Ascending aorta (tissue), 2 donors: ENCODE measurements at regions of chr17 and their contacts with region 1.

Region 1: DNA sequence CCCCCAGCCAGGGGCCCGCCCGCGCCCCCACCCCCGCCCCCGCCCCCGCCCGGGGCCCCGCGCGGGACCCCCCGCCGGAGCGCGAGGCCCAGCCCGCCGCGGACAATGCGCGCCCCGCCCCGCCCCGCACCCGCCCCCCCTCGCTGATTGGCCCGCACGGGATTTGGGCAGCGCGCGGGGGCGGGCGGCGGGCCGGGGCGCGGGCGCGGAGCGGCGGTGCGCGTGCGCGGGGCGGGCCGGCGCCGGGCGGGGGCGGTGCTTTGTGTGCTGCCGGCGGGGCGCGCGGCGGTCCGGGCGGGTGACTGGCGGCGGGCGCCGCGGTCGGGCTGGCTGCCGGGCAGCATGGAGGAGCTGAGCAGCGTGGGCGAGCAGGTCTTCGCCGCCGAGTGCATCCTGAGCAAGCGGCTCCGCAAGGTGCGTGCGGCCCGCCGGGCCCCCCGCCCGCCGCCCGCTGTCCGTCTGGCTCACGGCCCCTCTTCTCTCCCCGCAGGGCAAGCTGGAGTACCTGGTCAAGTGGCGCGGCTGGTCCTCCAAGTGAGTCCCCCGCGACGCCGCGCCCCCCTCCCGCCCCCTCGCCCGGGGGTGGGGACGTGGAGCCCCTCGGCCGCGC is at the start of gene CBX2:
- DNase-seq: peak in 1 of 2 donors; percentile 80
- H3K4me3 ChIP-seq: peak within 1 kb of the TSS; percentile 70 to 72
- H3K27ac ChIP-seq: no peak within 1 kb of the TSS
- H3K4me1 ChIP-seq: peaks cover 5 to 7% of the 10 kb centered on the region in 2 donors
- H3K27me3 ChIP-seq: peaks cover 17% of the 10 kb centered on the region
- CTCF ChIP-seq: no peak
- total RNA-seq, gene CBX2: 4.6 TPM

Region 2: DNA sequence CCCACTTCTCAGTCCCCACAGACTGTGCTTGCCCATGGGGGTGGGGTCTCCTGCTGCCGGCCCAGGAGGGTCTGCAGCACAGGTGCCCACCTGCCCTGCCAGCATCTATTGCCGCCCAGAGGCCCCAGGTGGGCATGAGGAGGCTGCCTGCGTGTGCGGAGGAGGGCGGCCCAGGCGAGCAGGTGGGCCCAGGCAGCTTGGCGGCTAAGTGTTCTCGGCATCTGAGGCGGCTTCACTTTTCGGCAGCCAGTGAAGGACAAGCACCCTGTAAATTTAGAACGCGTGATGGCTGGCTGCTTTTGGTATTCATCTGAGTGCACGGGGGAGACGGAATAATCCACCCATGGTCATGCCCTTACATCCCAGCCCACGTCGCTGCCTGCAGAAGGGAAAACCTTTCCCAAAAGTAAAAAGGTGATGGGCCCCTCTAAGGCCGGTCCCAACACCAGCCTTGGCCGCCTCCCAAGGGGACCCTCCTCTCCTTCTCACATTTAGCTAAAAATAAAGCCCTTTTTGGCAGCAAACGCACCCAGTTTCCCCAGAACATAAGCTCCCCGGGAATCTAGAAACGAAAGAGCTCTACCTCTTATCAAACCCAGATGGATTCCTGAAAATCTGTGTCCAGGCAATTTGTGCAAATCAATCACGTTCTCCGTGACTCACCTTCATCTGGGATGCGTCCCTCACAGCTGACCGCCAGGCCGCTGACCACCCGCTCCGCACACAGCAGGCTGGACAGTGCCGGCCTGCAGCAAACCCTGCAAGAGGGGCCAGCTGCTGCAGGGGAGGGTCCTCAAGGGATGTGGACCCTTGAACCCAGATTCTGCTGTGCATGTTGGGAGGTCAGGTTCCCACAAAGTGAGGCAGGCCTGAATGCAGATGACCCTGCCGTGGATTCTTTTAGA is 246.6 kb before region 1 on chr17:
- intact Hi-C with region 1: no loop called
- DNase-seq: no peak
- H3K4me3 ChIP-seq: no peak overlapping the region
- H3K27ac ChIP-seq: no peak overlapping the region
- H3K4me1 ChIP-seq: no peaks in the 10 kb centered on the region
- H3K27me3 ChIP-seq: no peaks in the 10 kb centered on the region
- CTCF ChIP-seq: no peak

Region 3: GRCh38 chr17:79695797-79696609 is 82.0 kb before region 1 on chr17:
- intact Hi-C with region 1: no loop called
- DNase-seq: no peak
- H3K4me3 ChIP-seq: no peak overlapping the region
- H3K27ac ChIP-seq: no peak overlapping the region
- H3K4me1 ChIP-seq: peaks cover 0 to 11% of the 10 kb centered on the region in 2 donors
- H3K27me3 ChIP-seq: no peaks in the 10 kb centered on the region
- CTCF ChIP-seq: no peak

Region 4: DNA sequence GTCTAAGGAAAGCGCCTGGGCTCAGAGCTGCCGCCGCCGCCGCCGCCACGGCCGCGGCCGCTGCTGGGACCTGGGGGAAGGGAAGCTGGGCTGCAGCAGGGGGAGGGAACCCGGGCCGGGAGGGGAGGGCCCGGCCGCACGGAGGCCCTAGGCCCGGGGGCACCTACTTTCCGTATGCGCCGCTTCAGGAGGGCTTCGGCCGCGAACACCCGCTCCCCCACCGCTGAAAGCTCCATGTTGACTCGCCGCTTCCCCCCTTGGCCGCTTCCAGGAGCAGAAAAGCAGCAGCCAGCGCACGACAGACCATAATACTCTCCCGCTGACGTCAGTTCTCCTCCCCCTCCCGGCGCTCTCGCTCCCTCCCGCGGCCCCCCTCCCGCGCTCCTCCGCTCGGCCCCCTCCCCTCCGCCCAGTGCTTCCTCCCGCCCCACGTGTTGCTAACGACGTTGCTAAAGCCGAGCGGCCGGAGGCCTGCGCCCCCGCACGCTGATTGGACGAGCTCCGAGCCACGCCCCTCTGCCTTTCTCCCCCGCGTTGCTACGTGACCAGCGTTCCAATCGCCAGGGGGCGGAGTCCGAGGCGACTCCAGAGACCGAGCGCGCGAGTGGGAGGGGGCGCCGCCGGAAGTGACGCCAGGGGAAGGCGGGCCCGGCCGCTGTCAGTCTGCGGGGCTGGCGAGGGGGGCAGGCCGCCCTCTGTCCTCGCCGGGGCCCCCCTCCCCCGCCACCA is 18.9 kb after region 1 on chr17 and contains the start of gene CBX8:
- intact Hi-C with region 1: loop called (anchors 2 kb)
- DNase-seq: peak; percentile 96 to 100
- H3K4me3 ChIP-seq: peak within 1 kb of the TSS; percentile 79 to 82
- H3K27ac ChIP-seq: peak within 1 kb of the TSS; percentile 29 to 41
- H3K4me1 ChIP-seq: peaks cover 23 to 32% of the 10 kb centered on the region in 2 donors
- H3K27me3 ChIP-seq: peaks cover 52% of the 10 kb centered on the region
- CTCF ChIP-seq: peak in 1 of 3 experiments; percentile 10
- total RNA-seq, gene CBX8: 1.1 TPM

Region 5: GRCh38 chr17:79810130-79811010 is 32.4 kb after region 1 on chr17:
- intact Hi-C with region 1: loop called (anchors 2 kb)
- DNase-seq: no peak
- H3K4me3 ChIP-seq: peak overlapping the region; percentile 7 to 31
- H3K27ac ChIP-seq: no peak overlapping the region
- H3K4me1 ChIP-seq: peaks cover 23 to 43% of the 10 kb centered on the region in 2 donors
- H3K27me3 ChIP-seq: peaks cover 67% of the 10 kb centered on the region
- CTCF ChIP-seq: no peak